Left cardiac atrium (tissue), 4 donors: ENCODE measurements at regions of chr13 and their contacts with region 1.

Region 1: DNA sequence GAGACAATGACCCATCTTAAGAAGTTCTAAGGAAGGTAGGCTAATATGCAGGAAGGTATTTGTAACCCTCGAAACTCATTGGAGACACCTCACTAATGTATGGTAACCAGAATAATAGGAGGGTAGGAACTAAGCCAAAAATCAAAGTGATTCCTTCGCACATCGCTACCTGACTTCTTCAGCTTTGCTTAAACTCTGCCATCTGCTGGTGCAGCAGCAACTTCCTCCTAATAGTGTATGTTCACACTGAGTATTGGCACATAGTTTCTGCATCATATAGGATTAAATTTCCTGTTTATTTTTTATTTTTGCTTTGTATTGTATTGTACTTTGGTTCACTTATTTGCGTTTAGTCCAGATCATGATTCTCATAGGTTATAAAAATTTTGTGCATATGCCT is 676.2 kb downstream of the GPC5 start:
- DNase-seq: no peak
- ATAC-seq: no peak

Region 2: GRCh38 chr13:91817250-91817649 is 257.4 kb before region 1 on chr13:
- intact Hi-C with region 1: loop called in 1 of 2 experiments (anchors 10 kb)
- DNase-seq: no peak
- ATAC-seq: no peak